ENCODE measurements at regions of chr18 and their contacts with region 1.

Region 1: DNA sequence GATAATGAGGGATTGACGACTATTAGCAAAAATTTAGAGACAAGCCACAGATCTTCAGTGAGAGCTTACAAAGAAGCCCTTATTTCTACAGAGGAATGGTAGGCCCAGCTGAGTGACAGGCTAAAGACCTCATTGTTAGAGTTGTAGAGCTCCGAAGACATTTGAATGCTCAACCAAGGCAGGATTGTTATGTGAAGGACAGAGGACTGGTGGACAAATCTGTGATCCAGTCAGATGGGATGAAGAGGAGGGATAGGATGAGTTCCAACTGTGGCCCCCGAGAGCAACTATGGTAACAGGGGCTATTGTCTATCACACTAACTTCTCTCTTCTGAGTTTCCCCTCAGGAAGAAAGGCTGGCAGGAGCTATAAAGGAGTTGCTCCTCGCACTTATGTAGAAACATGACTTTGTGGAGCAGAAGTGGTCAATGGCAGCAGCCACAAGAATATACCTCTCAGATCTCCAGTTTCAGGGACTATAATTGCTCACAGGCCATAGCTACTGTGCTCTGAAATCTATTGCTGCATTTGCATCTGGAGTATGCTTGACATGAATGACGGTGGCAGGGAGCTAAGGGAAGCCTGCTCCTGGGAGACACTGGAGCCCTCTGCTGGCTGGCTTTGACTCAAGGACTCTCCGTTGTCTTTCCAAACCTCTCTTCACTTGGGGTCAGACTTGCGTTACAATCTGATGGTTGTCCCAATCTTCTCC is 50.3 kb upstream of the GREB1L start:
- DNase-seq: peak in 1 of 2 donors; percentile 25
- ATAC-seq: no peak
- H3K4me3 ChIP-seq: no peak overlapping the region
- H3K27ac ChIP-seq: no peak overlapping the region
- H3K4me1 ChIP-seq: no peaks in the 10 kb centered on the region
- H3K27me3 ChIP-seq: no peaks in the 10 kb centered on the region
- CTCF ChIP-seq: peak in 3 of 5 experiments; percentile 26 to 52 (median 28)
- POLR2A ChIP-seq: no peak

Region 2: DNA sequence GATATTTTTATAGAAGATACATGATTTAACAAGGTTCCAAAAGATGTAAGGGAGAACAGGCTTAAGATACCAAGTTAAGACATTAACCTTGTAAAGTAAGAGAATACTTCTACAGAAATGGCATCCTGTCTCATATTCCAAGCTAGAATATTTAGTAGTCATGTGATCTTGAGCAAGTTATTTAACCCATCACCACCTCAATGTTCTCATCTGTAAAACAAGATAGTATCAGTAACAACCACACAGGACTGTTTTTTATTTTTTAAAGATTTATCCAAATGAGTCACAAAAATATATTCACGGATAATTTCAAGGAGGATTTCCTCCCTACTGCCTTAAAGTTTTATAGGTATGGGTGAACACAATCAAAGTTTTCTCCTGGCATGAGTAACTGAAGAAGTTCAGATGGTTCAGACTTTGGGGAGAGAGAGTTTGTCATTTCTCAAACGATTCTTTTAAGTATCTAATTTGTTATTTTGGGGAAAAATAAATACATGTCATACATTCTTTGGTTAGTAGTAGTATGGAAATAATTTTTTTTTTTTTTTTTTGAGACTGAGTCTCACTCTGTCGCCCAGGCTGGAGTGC is 106.1 kb before region 1 on chr18:
- in situ Hi-C with region 1: no loop called
- intact Hi-C with region 1: no loop called
- DNase-seq: no peak
- ATAC-seq: no peak
- H3K4me3 ChIP-seq: no peak overlapping the region
- H3K27ac ChIP-seq: no peak overlapping the region
- H3K4me1 ChIP-seq: peaks cover 16 to 25% of the 10 kb centered on the region in 2 donors
- H3K27me3 ChIP-seq: no peaks in the 10 kb centered on the region
- CTCF ChIP-seq: no peak
- POLR2A ChIP-seq: no peak

Region 3: DNA sequence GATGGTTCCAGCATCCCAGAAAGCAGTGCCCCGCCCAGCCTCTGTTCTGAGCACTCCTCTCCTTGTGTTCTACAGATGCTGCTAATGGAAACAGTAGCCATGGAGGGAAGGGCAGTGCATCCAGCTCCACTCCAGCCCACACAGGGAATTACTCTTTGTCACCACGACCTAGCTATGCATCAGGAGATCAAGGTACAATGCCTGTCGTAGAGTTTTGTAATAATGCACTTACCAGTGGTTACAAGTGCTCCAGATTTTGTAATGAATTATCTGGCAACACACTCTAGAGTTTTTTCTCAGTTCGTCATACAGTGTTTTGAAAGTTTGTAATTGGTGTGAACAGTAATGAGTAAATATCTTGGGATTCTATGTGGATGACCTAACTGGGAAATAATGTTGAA is 247.7 kb after region 1 on chr18:
- in situ Hi-C with region 1: loop called in 3 of 4 experiments (anchors 5 to 10 kb)
- intact Hi-C with region 1: loop called (anchors 1 kb)
- DNase-seq: no peak
- ATAC-seq: peak; percentile 21 to 29
- H3K4me3 ChIP-seq: no peak overlapping the region
- H3K27ac ChIP-seq: peak overlapping the region in 3 of 4 donors; percentile 90 to 96 (median 92)
- H3K4me1 ChIP-seq: peaks cover 1 to 39% of the 10 kb centered on the region in 2 donors
- H3K27me3 ChIP-seq: no peaks in the 10 kb centered on the region
- CTCF ChIP-seq: no peak
- POLR2A ChIP-seq: no peak

Region 4: DNA sequence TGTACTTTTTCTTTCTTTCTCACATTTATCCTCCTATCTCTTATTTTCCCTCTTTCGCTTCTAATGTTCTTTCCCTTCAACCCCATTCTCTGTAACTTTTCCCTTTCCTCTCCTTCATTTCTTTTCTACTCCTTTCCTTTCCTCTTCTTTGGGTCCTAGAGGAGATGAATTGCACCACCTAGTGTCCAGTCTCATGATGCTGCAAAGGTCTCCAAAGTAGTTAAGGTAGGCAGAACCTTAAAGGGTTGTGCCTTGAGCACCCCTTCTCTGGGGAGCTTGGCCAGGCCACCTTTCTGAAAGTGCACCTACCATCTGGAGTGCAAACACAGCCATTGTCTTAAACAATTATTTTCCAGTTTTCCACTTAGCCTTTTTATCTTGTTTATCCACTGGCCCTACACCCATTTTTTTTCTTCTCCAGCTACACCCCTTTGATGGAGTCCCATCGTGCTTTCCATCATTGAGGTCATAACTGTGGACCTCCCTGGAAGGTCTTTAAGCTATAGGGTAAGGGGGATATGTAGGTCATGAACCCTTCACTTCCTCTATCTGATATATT is 252.8 kb after region 1 on chr18:
- in situ Hi-C with region 1: loop called (anchors 5 to 10 kb)
- intact Hi-C with region 1: loop called (anchors 1 kb)
- DNase-seq: peak in 1 of 2 donors; percentile 42
- ATAC-seq: peak; percentile 45 to 68
- H3K4me3 ChIP-seq: peak overlapping the region in 1 of 4 donors; percentile 10
- H3K27ac ChIP-seq: peak overlapping the region in 3 of 4 donors; percentile 90 to 96 (median 92)
- H3K4me1 ChIP-seq: peaks cover 18 to 66% of the 10 kb centered on the region in 2 donors
- H3K27me3 ChIP-seq: no peaks in the 10 kb centered on the region
- CTCF ChIP-seq: peak; percentile 52 to 62 (median 53)
- POLR2A ChIP-seq: no peak

Region 5: DNA sequence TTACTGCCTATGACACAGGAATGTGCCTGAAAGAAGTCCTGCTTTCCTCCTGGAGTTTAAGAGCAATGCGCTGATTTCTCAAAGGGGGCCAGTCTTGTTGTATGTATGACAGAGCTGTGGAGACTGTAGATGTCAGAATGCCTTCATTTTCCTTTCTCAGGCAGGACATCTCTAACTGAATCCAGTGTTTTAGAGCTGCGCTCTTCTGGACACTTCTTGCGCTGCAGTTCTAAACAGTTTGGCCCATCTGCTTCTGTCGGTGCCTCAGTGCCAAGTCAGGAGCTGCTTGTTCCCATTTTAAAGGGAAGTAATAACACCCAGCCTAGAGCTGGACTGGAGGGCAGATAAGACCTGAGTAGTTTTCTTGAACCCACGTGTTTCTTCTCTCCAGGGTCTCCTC is 317.3 kb after region 1 on chr18:
- in situ Hi-C with region 1: no loop called
- intact Hi-C with region 1: loop called (anchors 10 kb)
- DNase-seq: no peak
- ATAC-seq: peak; percentile 27 to 42
- H3K4me3 ChIP-seq: no peak overlapping the region
- H3K27ac ChIP-seq: peak overlapping the region in 2 of 4 donors; percentile 2 to 3
- H3K4me1 ChIP-seq: peaks cover 0 to 6% of the 10 kb centered on the region in 2 donors
- H3K27me3 ChIP-seq: no peaks in the 10 kb centered on the region
- CTCF ChIP-seq: no peak
- POLR2A ChIP-seq: no peak

Region 6: DNA sequence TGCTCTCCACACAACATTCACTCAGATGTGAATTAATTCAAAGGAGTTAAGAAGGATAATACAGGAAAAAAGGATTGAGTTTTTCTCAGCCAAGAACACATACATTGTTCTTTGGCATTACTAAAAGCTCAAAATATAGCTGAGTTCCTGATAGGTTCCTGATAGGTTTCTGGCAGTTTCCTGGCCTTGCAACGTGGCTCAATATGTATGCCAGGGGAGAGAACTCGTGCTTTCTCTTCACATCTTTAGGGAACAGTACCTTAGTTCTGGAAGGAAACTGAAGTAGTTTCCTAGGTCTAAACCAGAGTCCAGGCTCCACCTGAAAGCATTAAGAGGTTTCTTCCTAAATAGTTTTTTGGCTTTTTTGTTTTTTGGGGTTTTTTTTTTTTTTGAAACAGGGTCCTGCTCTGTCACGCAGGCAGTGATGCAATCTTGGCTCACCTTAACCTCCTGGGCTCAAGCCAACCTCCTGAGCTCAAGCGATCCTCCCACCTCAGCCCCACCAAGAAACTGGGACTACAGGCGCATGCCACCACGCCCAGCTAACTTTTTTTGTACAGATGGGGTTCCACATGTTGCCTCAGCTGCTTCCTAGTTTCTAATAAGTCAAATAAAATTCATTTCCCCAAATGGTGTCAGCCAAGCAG is 366.0 kb after region 1 on chr18:
- in situ Hi-C with region 1: no loop called
- intact Hi-C with region 1: no loop called
- DNase-seq: no peak
- ATAC-seq: no peak
- H3K4me3 ChIP-seq: no peak overlapping the region
- H3K27ac ChIP-seq: peak overlapping the region in 2 of 4 donors; percentile 24 to 46
- H3K4me1 ChIP-seq: no peaks in the 10 kb centered on the region
- H3K27me3 ChIP-seq: no peaks in the 10 kb centered on the region
- CTCF ChIP-seq: no peak
- POLR2A ChIP-seq: no peak

Region 7: DNA sequence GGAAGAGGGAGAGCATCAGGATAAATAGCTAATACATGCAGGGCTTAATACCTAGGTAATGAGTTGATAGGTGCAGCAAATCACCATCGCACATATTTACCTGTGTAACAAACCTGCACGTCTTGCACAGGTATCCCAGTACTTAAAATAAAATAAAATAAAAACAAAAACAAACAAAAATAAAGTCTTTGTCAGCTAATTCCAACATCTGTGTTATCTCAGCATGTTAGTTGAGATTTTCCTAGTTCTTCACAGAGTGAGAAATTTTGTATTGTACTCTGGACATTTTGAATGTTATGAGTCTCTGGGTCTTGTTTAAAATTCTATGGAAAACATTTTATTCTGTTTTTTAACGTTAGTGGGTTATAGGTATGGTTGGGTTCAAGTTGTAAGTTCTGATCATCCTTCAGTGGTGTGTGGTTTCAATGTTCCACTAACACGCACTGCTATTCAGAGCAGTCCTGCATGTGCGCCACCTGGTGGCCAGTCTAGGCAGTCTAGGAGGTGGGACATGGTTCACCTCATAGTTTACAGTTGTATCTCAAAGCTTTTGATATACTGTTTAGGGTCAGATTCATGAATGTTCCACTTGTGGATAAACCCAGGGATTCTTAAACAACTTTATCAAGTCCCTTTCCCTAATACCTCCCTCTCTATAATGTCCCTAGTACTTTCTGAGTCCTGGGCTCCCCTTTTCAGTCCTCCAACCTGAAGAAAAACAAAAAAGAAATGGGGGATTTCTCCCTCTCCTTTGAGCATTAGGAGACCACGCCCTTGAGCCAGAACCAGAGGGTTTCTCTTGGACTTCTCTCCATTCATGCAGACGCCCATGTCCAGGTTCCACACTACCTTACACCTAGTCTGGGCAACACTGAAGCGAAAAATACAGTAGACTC is 764.3 kb after region 1 on chr18:
- in situ Hi-C with region 1: loop called in 1 of 4 experiments (anchors 25 kb)
- intact Hi-C with region 1: loop called (anchors 2 kb)
- DNase-seq: peak; percentile 25 to 36
- ATAC-seq: peak; percentile 66 to 75
- H3K4me3 ChIP-seq: no peak overlapping the region
- H3K27ac ChIP-seq: no peak overlapping the region
- H3K4me1 ChIP-seq: no peaks in the 10 kb centered on the region
- H3K27me3 ChIP-seq: no peaks in the 10 kb centered on the region
- CTCF ChIP-seq: peak; percentile 53 to 88 (median 60)
- POLR2A ChIP-seq: no peak